IMR-90 (cell line): ENCODE measurements at regions of chr3 and their contacts with region 1.

Region 1: GRCh38 chr3:125916376-125916978 is 52.5 kb upstream of the ROPN1B start:
- DNase-seq: peak; percentile 91
- ATAC-seq: peak; percentile 97
- H3K4me3 ChIP-seq: peak overlapping the region; percentile 63
- H3K27ac ChIP-seq: peak overlapping the region; percentile 94
- H3K4me1 ChIP-seq: peaks cover 6% of the 10 kb centered on the region
- H3K27me3 ChIP-seq: no peaks in the 10 kb centered on the region
- CTCF ChIP-seq: peak; percentile 47
- POLR2A ChIP-seq: no peak; the same call in 1 of the 2 replicates
- RAD21 ChIP-seq: peak; percentile 45

Region 2: DNA sequence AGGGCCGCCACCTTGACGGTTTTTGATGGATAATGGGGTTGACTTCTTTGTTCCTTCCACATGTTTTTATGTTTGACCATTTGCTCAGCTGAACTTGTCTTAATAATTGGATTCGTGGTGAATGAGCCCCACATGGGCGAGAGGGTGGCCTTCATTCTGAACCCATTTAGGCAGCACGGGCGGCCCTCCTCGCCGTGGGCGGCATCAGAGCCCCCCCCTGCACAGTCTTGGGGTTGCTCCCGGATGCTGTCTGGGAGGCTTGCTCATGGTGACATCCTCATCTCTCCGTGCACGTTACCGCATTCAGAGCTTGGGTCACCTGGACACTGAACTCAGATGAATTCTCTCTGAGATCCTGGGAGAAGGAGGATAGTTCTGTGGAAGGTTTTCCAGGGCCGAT is 148.8 kb before region 1 on chr3:
- CTCF ChIA-PET with region 1: no interaction called
- POLR2A ChIA-PET with region 1: no interaction called
- dilution Hi-C with region 1: no loop called
- in situ Hi-C with region 1: no loop called
- intact Hi-C with region 1: loop called (anchors 5 kb)
- DNase-seq: no peak
- ATAC-seq: no peak
- H3K4me3 ChIP-seq: no peak overlapping the region
- H3K27ac ChIP-seq: no peak overlapping the region
- H3K4me1 ChIP-seq: no peaks in the 10 kb centered on the region
- H3K27me3 ChIP-seq: peaks cover 19% of the 10 kb centered on the region
- CTCF ChIP-seq: no peak
- POLR2A ChIP-seq: no peak
- RAD21 ChIP-seq: no peak

Region 3: DNA sequence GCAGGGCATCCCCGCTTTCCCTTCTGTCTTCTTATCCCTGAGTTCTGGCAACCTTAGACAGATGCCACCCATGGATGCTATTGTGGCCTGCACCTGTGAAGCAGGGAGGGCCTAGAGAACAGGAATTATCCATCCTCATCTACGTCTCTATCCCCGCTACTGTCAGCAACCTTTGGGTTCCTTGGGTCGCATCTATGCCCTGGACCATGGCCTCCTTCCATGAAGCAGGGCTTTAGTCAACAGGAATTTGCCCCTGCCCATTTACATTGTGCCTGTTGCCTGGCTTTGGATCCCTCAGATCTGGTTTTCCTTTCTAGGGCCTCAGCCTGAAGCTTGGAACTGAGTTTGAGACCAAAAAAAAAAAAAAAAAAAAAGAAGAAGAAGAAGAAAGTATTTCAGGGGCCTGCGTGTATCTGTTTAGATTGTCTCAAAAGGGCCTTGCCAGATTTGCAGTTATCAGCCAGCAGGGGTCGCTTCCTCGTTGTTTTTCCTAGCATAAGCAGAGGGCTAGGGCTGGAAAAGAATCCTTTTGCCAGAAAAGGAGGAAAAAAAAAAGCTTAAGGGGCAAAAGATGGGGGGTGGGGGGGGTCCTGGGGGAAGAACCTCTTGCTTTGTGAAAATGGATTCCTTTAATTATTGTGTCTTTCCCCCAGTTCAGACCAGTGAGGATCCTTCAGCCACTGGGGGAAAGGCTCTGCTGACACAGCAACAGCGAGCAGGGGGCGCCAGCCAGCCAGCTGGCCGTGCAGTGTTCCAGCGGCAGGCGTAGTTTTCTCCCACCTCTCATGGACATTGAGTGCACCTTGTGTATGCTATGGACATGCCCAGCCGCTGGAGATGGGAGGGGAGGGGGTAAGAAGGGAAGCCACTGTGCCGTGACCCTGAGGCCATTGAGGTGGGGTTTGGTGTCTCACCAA is 329.6 kb after region 1 on chr3:
- CTCF ChIA-PET with region 1: no interaction called
- POLR2A ChIA-PET with region 1: no interaction called
- dilution Hi-C with region 1: no loop called
- in situ Hi-C with region 1: no loop called
- intact Hi-C with region 1: no loop called
- DNase-seq: peak; percentile 65
- ATAC-seq: peak; percentile 87
- H3K4me3 ChIP-seq: no peak overlapping the region
- H3K27ac ChIP-seq: no peak overlapping the region
- H3K4me1 ChIP-seq: no peaks in the 10 kb centered on the region
- H3K27me3 ChIP-seq: peaks cover 28% of the 10 kb centered on the region
- CTCF ChIP-seq: peak; percentile 65
- POLR2A ChIP-seq: no peak
- RAD21 ChIP-seq: peak; percentile 63